ENCODE measurements at regions of chr2 and their contacts with region 1.

Region 1: DNA sequence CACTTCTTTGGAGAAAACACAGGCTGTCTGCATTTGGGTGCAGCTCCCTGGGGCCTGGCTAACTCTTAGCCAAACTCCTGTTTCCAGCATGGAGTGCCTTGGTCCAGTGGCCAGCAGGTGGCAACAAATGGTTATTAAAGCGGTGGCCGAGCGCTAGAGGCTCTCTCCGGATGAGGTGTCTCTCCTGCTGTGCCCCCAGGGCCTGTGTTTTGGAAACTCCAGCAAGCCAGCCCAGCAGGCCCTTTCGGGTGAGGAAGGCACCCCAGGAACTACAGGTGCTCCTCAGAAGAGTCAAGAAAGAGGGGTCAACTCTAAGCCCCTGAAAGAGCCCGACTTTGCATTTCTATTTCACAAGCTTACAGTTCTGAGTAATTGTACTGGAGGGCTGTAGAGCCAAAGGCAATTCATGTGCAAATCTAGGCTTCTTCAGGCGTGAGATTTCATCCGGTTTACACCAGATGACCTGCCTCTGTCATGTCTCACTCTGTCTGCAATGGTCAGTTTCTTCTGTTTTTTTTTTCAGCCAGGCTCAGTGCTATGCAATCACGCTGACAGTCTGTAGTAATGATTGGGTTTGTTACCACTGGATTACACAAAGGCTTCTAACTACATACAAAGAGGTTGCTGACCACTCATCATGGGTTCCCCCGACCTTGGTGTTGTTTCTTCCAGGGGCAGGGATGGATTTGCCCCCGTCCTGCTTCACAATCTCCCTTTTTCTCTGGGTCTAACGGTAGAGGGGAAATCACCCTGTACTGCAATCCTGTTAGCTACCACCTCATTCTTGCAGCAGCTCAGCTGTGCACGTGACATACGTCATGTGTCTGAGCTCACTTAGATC is 7.6 kb upstream of the CHRNA1 start:
- DNase-seq: peak; percentile 79
- H3K27ac ChIP-seq: no peak overlapping the region
- CTCF ChIP-seq: peak; percentile 78

Region 2: GRCh38 chr2:174748948-174749347 is 22.9 kb before region 1 on chr2:
- CTCF ChIA-PET with region 1: interaction called, 13 read pairs
- POLR2A ChIA-PET with region 1: no interaction called
- DNase-seq: peak; percentile 74
- H3K27ac ChIP-seq: no peak overlapping the region
- CTCF ChIP-seq: peak; percentile 86

Region 3: DNA sequence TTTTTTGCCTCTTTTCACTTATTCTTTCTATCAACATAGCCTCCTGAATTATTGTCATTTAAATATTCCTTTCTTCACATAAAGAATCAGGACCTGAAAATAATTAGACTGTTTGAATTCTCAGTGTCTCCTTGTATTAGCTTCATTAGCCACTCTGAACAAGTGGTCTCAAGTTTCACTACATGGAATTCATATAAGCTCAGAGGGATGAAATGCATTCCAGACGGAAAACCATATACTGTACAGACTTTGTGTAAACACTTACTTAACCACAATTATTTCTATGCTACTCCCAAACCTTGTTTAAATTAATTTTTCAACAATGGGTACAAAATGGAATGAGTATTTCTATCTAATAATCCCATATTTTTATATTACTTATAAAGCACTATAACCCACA is 179.9 kb after region 1 on chr2:
- CTCF ChIA-PET with region 1: interaction called, 10 read pairs
- POLR2A ChIA-PET with region 1: no interaction called
- DNase-seq: no peak
- H3K27ac ChIP-seq: no peak overlapping the region
- CTCF ChIP-seq: no peak

Region 4: DNA sequence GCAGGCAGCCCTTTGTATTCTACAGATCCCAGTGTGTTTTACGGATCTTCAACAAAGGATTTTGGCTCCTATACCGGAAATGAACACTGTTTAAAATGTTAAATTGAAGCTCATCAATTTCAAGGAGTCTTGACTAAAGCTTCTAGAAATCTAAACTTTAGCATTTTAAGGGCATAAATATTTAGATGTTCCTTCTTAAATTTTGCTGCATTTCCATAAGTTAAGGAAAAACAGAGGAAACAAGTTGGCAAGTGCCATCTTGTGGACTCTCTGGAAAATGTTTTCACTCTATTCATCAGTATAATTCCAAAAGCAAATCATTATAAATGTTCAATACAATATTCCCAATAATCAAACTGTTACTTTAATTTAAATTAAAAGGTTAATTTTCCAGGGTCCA is 213.8 kb after region 1 on chr2:
- CTCF ChIA-PET with region 1: interaction called, 48 read pairs
- POLR2A ChIA-PET with region 1: no interaction called
- DNase-seq: peak; percentile 28
- H3K27ac ChIP-seq: no peak overlapping the region
- CTCF ChIP-seq: peak; percentile 61